Caco-2 (cell line): ENCODE measurements at regions of chr18 and their contacts with region 1.

Region 1: GRCh38 chr18:7566567-7567473 is at the start of gene PTPRM:
- DNase-seq: peak; percentile 72 to 89
- H3K4me3 ChIP-seq: peak within 1 kb of the TSS; percentile 93
- H3K4me3 Mint-ChIP-seq: peak within 1 kb of the TSS; percentile 83
- H3K27ac Mint-ChIP-seq: peak within 1 kb of the TSS; percentile 72
- H3K4me1 ChIP-seq: peaks cover 17% of the 10 kb centered on the region
- H3K4me1 Mint-ChIP-seq: peaks cover 16% of the 10 kb centered on the region
- H3K27me3 ChIP-seq: no peaks in the 10 kb centered on the region
- H3K27me3 Mint-ChIP-seq: no peaks in the 10 kb centered on the region
- CTCF ChIP-seq: peak in 1 of 2 experiments; percentile 9
- total RNA-seq, gene PTPRM: 100.0 and 112 TPM in 2 replicates

Region 2: DNA sequence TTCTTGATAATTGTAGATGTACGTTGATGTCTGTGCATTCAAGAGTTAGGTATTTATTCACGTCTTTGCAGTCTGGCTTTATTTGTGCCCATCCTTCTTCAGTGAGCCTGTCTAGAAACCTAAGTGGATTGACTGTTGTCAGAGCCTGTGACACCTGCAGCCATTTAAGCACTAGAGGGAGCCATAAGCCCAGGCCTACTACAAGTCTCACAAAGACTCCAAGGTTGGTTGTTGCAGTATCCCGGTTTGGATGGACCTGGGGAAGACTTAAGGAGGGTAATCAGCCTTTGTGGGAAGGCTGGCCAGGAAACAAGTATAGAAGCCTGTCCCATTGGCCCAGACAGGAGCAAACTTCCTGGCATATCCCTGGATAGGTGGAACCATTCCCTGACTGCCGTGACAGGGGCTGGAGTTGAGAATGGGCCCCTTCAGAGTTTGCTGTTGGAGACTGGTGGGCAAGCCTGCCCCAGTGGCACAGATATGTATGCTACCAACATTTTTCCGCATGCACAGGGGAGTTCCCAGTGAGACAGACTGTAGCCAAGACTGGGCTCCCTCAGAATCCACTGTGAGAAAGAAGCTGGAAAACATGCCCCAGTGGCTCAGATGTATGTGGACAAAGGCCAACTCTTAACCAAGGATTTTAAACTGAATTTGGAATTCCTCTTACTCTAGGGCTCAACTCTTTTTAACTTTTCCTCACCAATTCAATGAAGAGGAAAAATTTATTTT is 345.2 kb before region 1 on chr18:
- CTCF ChIA-PET with region 1: no interaction called
- POLR2A ChIA-PET with region 1: interaction called, 8 read pairs
- intact Hi-C with region 1: loop called (anchors 1 kb)
- DNase-seq: peak; percentile 75 to 77
- H3K4me3 ChIP-seq: no peak overlapping the region
- H3K4me3 Mint-ChIP-seq: no peak overlapping the region
- H3K27ac Mint-ChIP-seq: no peak overlapping the region
- H3K4me1 ChIP-seq: no peaks in the 10 kb centered on the region
- H3K4me1 Mint-ChIP-seq: no peaks in the 10 kb centered on the region
- H3K27me3 ChIP-seq: no peaks in the 10 kb centered on the region
- H3K27me3 Mint-ChIP-seq: peaks cover 6% of the 10 kb centered on the region
- CTCF ChIP-seq: peak; percentile 65 to 84

Region 3: DNA sequence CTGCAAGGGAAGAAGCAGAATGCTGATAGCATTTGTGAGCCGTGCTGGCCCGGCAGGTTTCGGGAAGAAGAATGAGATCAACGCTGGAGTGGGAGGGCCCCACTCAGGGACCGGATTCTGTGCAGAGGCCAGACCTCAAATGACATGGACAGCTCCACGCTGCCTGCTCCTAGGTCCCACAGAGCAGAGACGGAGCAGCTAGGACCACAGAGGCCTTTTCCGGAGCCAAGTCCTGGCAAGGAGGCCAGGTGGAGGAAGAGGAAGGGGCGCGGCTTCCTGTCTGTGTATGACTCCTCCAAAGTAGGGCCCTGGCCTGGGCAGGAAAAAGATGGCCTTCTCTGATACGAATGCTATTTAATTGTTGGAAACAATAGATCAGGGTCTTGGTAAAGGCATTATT is 196.0 kb before region 1 on chr18:
- CTCF ChIA-PET with region 1: interaction called, 3 read pairs
- POLR2A ChIA-PET with region 1: interaction called, 4 read pairs
- intact Hi-C with region 1: loop called (anchors 2 kb)
- DNase-seq: peak in 1 of 2 experiments; percentile 62
- H3K4me3 ChIP-seq: 0 out of 2 replicates have a peak overlapping the region, but pooled peaks have one; percentile 13
- H3K4me3 Mint-ChIP-seq: peak overlapping the region; percentile 66
- H3K27ac Mint-ChIP-seq: peak overlapping the region; percentile 10
- H3K4me1 ChIP-seq: peaks cover 17% of the 10 kb centered on the region
- H3K4me1 Mint-ChIP-seq: peaks cover 31% of the 10 kb centered on the region
- H3K27me3 ChIP-seq: no peaks in the 10 kb centered on the region
- H3K27me3 Mint-ChIP-seq: no peaks in the 10 kb centered on the region
- CTCF ChIP-seq: no peak

Region 4: GRCh38 chr18:7512348-7512747 is 54.5 kb before region 1 on chr18:
- CTCF ChIA-PET with region 1: no interaction called
- POLR2A ChIA-PET with region 1: no interaction called
- intact Hi-C with region 1: loop called (anchors 5 kb)
- DNase-seq: no peak
- H3K4me3 ChIP-seq: no peak overlapping the region
- H3K4me3 Mint-ChIP-seq: no peak overlapping the region
- H3K27ac Mint-ChIP-seq: no peak overlapping the region
- H3K4me1 ChIP-seq: peaks cover 10% of the 10 kb centered on the region
- H3K4me1 Mint-ChIP-seq: peaks cover 11% of the 10 kb centered on the region
- H3K27me3 ChIP-seq: 0 out of 2 replicates have a peak, but pooled peaks cover 1% of the 10 kb centered on the region
- H3K27me3 Mint-ChIP-seq: no peaks in the 10 kb centered on the region
- CTCF ChIP-seq: no peak

Region 5: GRCh38 chr18:7626922-7627440 is 60.2 kb after region 1 on chr18:
- CTCF ChIA-PET with region 1: interaction called, 13 read pairs
- POLR2A ChIA-PET with region 1: no interaction called
- intact Hi-C with region 1: loop called (anchors 2 kb)
- DNase-seq: peak; percentile 71 to 80
- H3K4me3 ChIP-seq: no peak overlapping the region
- H3K4me3 Mint-ChIP-seq: peak overlapping the region; percentile 21
- H3K27ac Mint-ChIP-seq: peak overlapping the region; percentile 88
- H3K4me1 ChIP-seq: peaks cover 62% of the 10 kb centered on the region
- H3K4me1 Mint-ChIP-seq: peaks cover 45% of the 10 kb centered on the region
- H3K27me3 ChIP-seq: no peaks in the 10 kb centered on the region
- H3K27me3 Mint-ChIP-seq: no peaks in the 10 kb centered on the region
- CTCF ChIP-seq: peak in 1 of 2 experiments; percentile 53

Region 6: GRCh38 chr18:7856733-7857132 is 289.9 kb after region 1 on chr18:
- CTCF ChIA-PET with region 1: no interaction called
- POLR2A ChIA-PET with region 1: no interaction called
- intact Hi-C with region 1: no loop called
- DNase-seq: peak; percentile 59 to 74
- H3K4me3 ChIP-seq: no peak overlapping the region
- H3K4me3 Mint-ChIP-seq: peak overlapping the region; percentile 52
- H3K27ac Mint-ChIP-seq: peak overlapping the region; percentile 67
- H3K4me1 ChIP-seq: peaks cover 28% of the 10 kb centered on the region
- H3K4me1 Mint-ChIP-seq: peaks cover 22% of the 10 kb centered on the region
- H3K27me3 ChIP-seq: no peaks in the 10 kb centered on the region
- H3K27me3 Mint-ChIP-seq: no peaks in the 10 kb centered on the region
- CTCF ChIP-seq: no peak